Activated naive CD4-positive, alpha-beta T cell treated with anti-CD3 and anti-CD28 coated beads for 36 hours (primary cell): ENCODE measurements at regions of chrX and their contacts with region 1.

Region 1: GRCh38 chrX:21374163-21374993 is at the start of gene CNKSR2:
- DNase-seq: peak; percentile 63
- H3K4me3 Mint-ChIP-seq: peak within 1 kb of the TSS; percentile 92
- H3K27ac Mint-ChIP-seq: peak within 1 kb of the TSS; percentile 61
- H3K4me1 Mint-ChIP-seq: peaks cover 28% of the 10 kb centered on the region
- H3K27me3 Mint-ChIP-seq: no peaks in the 10 kb centered on the region
- total RNA-seq, gene CNKSR2: 6.6 to 8.4 TPM

Region 2: GRCh38 chrX:20594985-20595384 is 779.4 kb before region 1 on chrX:
- CTCF ChIA-PET with region 1: no interaction called
- intact Hi-C with region 1: loop called (anchors 10 kb)
- DNase-seq: no peak
- H3K4me3 Mint-ChIP-seq: no peak overlapping the region
- H3K27ac Mint-ChIP-seq: no peak overlapping the region
- H3K4me1 Mint-ChIP-seq: peaks cover 12% of the 10 kb centered on the region
- H3K27me3 Mint-ChIP-seq: no peaks in the 10 kb centered on the region

Region 3: DNA sequence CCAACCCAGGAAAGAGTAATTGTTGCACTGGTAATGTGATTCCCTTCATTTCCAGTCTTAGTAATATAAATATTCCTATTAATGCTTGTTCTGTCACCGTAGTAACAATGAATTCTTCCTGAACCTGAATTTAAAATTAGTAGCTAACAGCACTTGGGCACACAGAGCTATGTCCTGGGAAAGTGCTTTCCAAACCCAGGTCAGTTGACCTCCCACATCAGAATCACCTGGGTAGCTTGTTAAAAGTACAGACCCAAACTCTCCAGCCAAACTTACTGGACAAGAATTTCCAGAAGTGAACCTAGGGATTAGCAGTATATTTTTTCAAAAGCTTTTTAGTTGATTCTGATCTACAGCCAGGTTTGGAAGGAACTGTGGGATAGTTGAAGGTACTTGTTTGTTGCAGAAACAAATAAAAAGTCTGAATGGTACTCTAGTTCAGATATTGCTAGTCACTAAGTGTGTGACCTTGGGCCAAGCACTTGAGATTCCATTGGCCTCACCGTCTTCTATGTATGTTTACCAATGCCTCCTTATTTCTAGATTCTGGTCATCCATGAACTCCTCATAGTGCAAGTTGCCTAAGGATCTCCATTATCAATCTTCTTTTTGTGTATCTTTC is 193.0 kb before region 1 on chrX:
- CTCF ChIA-PET with region 1: no interaction called
- intact Hi-C with region 1: no loop called
- DNase-seq: no peak
- H3K4me3 Mint-ChIP-seq: no peak overlapping the region
- H3K27ac Mint-ChIP-seq: no peak overlapping the region
- H3K4me1 Mint-ChIP-seq: no peaks in the 10 kb centered on the region
- H3K27me3 Mint-ChIP-seq: no peaks in the 10 kb centered on the region

Region 4: DNA sequence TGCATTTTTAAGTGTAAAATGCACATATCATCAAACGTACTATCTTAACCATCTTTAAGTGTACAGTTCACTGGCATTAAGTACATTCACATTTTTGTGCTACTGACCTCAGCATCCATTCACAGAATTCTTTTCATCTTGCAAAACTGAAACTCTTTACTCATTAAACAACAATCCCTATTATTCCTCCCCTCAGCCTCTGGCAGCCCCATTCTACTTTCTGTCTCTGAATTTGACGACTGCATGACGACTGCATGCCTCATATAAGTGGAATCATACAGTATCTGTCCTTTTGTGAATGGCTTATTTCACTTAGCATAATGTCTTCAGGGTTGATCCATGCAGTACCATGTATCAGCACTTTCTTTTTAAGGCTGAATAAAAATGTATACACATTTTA is 38.5 kb after region 1 on chrX:
- CTCF ChIA-PET with region 1: no interaction called
- intact Hi-C with region 1: no loop called
- DNase-seq: no peak
- H3K4me3 Mint-ChIP-seq: no peak overlapping the region
- H3K27ac Mint-ChIP-seq: no peak overlapping the region
- H3K4me1 Mint-ChIP-seq: peaks cover 9% of the 10 kb centered on the region
- H3K27me3 Mint-ChIP-seq: no peaks in the 10 kb centered on the region

Region 5: GRCh38 chrX:21427086-21427485 is 52.7 kb after region 1 on chrX:
- CTCF ChIA-PET with region 1: no interaction called
- intact Hi-C with region 1: no loop called
- DNase-seq: no peak
- H3K4me3 Mint-ChIP-seq: no peak overlapping the region
- H3K27ac Mint-ChIP-seq: no peak overlapping the region
- H3K4me1 Mint-ChIP-seq: peaks cover 15% of the 10 kb centered on the region
- H3K27me3 Mint-ChIP-seq: no peaks in the 10 kb centered on the region

Region 6: DNA sequence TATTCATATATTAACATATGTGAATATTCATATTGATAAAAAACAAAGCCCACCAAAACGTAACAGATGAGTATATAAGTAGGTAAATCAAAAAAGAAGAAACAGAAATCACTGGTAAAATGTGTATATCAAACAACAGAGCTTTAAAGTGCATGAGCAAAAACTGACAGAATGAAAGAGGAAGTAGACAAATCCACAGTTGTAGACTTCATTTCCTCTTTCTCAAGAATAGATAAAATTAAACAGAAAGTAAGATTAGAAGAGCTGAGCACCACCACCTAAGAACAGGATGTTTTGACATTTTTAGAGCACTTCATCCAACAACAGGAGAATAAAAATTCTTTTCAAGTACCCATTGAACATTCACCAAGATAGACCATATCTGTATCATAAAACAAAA is 64.4 kb after region 1 on chrX:
- CTCF ChIA-PET with region 1: no interaction called
- intact Hi-C with region 1: loop called (anchors 2 kb)
- DNase-seq: no peak
- H3K4me3 Mint-ChIP-seq: peak overlapping the region; percentile 67
- H3K27ac Mint-ChIP-seq: peak overlapping the region; percentile 89
- H3K4me1 Mint-ChIP-seq: peaks cover 19% of the 10 kb centered on the region
- H3K27me3 Mint-ChIP-seq: no peaks in the 10 kb centered on the region

Region 7: GRCh38 chrX:21658152-21658737 is 283.9 kb after region 1 on chrX and contains the start of gene KLHL34:
- CTCF ChIA-PET with region 1: no interaction called
- intact Hi-C with region 1: loop called (anchors 5 kb)
- DNase-seq: peak; percentile 26
- H3K4me3 Mint-ChIP-seq: peak within 1 kb of the TSS; percentile 67
- H3K27ac Mint-ChIP-seq: no peak within 1 kb of the TSS
- H3K4me1 Mint-ChIP-seq: peaks cover 11% of the 10 kb centered on the region
- H3K27me3 Mint-ChIP-seq: no peaks in the 10 kb centered on the region
- total RNA-seq, gene KLHL34: 1.1 to 1.2 TPM

Region 8: DNA sequence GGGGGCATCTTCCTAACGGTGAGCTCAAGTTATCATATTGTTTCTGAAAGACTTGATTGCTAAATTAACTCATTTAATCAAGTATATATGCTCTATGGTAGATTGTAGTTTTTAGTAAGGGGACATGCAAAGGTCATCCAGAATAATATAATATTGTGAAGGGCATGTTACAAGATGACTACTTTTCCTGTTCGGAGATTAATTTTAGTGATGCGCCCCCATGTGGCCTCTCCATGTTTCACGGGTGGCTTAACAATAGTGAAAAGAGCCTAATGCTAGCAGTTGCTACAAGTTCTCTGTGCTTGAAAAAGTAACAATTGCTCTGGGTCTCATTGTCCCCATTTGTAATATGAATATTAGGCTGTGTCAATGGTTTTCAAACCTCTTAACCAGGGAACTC is 371.4 kb after region 1 on chrX:
- CTCF ChIA-PET with region 1: no interaction called
- intact Hi-C with region 1: loop called (anchors 10 kb)
- DNase-seq: peak; percentile 64
- H3K4me3 Mint-ChIP-seq: no peak overlapping the region
- H3K27ac Mint-ChIP-seq: no peak overlapping the region
- H3K4me1 Mint-ChIP-seq: no peaks in the 10 kb centered on the region
- H3K27me3 Mint-ChIP-seq: no peaks in the 10 kb centered on the region

Region 9: DNA sequence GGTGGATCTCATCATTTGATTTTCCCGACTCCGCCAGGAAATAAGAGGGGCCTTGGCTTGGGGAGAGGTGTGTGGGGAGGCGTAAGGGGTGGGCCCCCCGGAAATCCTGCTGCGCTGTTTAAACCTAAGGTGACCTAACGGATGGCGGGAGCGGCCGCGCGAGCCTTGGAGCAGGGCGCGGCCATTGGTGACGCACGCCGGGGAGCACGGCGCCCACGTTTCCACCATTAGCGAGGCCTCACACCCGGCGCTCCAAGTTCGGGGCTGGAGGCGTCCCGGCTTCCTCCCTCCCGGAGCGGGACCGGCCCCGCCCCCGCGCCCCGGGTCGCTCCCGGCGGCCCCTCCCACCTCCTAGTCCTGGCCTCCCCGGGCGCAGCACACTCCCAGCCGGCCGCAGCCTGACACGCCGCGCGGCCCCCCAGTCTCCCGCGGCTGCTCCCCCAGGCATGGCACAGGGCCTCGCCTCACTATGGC is 566.0 kb after region 1 on chrX and contains the start of gene SMS:
- CTCF ChIA-PET with region 1: interaction called, 3 read pairs
- intact Hi-C with region 1: loop called (anchors 5 kb)
- DNase-seq: peak; percentile 58
- H3K4me3 Mint-ChIP-seq: peak within 1 kb of the TSS; percentile 85
- H3K27ac Mint-ChIP-seq: peak within 1 kb of the TSS; percentile 90
- H3K4me1 Mint-ChIP-seq: peaks cover 28% of the 10 kb centered on the region
- H3K27me3 Mint-ChIP-seq: no peaks in the 10 kb centered on the region
- total RNA-seq, gene SMS: 148 to 156 TPM